A549 (cell line): ENCODE measurements at regions of chr20 and their contacts with region 1.

Region 1: DNA sequence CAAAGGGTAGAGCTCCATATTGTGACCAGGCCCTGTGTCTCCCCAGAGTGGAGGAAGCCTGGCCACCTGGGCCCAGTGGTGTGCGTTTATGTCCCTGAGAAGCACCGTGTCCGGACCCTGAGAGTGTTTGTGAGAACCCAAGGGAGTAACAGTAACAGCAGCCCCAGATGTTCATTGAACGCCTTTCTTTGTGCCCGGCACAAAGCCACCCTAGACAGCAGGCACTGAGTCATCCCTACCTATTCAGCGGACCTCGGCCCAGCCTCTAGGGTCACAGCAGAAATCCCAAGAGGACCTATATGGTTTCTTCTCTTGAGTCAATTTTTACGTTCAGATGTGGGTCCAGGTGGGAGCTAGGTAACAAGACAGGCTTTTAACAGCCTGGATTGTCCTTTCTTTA is 24.5 kb downstream of the BCAS4 start:
- DNase-seq: no peak
- ATAC-seq: no peak
- H3K4me3 ChIP-seq: no peak overlapping the region
- H3K27ac ChIP-seq: no peak overlapping the region
- H3K4me1 ChIP-seq: peaks cover 12% of the 10 kb centered on the region
- CTCF ChIP-seq: no peak
- EP300 ChIP-seq: no peak
- POLR2A ChIP-seq: no peak
- RAD21 ChIP-seq: no peak

Region 2: GRCh38 chr20:50777373-50777772 is 42.0 kb before region 1 on chr20:
- CTCF ChIA-PET with region 1: no interaction called
- POLR2A ChIA-PET with region 1: no interaction called
- DNase-seq: no peak
- ATAC-seq: no peak
- H3K4me3 ChIP-seq: no peak overlapping the region
- H3K27ac ChIP-seq: no peak overlapping the region
- H3K4me1 ChIP-seq: peaks cover 14% of the 10 kb centered on the region; the same call in 1 of the 3 replicates
- CTCF ChIP-seq: no peak
- EP300 ChIP-seq: no peak
- POLR2A ChIP-seq: no peak
- RAD21 ChIP-seq: no peak

Region 3: GRCh38 chr20:50799890-50800655 is 19.3 kb before region 1 on chr20:
- CTCF ChIA-PET with region 1: interaction called, 14 read pairs
- POLR2A ChIA-PET with region 1: no interaction called
- DNase-seq: no peak
- ATAC-seq: no peak
- H3K4me3 ChIP-seq: no peak overlapping the region
- H3K27ac ChIP-seq: no peak overlapping the region
- H3K4me1 ChIP-seq: 0 out of 3 replicates have a peak, but pooled peaks cover 5% of the 10 kb centered on the region
- CTCF ChIP-seq: no peak
- EP300 ChIP-seq: no peak
- POLR2A ChIP-seq: no peak
- RAD21 ChIP-seq: no peak